ENCODE measurements at regions of chr2 and their contacts with region 1.

Region 1: DNA sequence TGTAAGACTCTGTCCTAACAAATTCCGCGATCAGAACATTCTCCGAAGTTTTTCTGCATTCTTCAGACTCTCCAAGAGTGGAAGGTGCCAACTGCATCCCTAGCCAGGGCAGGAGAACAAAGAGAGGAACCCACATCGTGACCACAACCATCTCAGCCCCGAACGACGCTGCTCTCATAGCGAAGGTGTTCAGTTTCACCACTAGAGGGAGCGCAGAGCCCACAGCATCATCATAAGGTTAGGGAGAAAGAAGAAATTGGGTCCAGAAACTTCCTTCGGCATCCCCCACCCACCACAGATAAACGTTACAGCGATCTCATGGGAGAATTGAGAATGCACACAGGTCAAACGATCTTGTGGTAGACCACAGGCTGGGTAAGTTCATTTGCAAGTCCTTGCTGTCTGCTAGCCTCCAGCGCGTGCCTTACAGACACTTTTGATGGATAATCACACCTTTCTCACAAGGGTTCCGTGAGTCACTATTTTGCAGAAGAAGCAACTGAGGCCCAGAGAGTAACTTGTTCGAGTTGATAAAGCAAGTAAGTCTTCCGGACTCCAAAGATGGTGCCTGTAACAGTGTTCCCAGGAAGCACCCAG is 53.7 kb upstream of the ARL4C start:
- DNase-seq: peak; percentile 26 to 85 (median 68)

Region 2: DNA sequence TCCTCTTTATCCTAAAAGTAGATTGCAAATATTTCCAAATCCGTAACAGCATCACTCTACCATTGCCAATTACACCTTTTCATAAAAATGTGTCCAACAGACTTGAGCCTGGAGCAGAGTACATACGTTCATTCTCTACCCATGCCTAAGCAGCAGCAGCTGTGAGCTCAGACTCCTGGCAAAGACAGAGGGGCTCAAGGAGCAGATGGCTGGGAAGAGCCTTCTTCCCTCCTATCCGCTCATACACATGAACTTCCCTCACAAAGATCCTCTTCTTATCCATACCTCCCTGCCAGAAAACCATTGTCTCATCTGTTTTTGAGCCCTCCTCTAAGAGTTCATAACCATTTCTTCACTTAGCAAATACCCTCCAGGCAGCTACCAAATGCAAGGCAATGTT is 110.6 kb after region 1 on chr2:
- intact Hi-C with region 1: no loop called
- DNase-seq: no peak

Region 3: DNA sequence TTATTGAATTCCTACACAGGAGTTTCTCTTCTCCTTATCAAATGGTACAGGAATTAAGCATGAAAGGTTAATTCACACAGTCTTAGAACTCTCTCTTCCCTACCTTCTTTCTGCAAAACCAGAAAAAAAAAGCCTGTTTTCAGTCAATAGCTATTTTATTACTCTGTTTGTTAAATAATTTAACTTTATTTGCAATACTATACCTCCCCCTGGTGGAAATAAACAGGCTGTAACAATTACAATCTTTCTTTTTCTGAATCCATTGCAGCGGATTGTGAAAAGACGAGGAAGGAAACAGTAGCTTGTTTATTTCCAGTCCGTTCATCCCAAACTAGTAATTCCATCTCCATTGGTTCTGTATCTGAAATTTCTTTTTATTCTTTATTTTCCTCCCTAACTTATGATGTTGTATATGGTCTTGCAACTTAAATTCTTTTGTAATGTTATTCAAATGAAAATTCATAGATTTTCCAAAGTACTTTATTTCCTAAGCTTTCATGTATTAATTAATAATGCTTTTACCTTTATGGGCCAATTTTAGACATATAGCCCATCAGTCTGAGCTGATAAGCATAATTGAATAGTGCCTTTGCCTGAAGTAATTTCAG is 566.4 kb after region 1 on chr2:
- intact Hi-C with region 1: loop called (anchors 2 kb)
- DNase-seq: no peak